ENCODE measurements at regions of chr6 and their contacts with region 1.

Region 1: GRCh38 chr6:50850223-50851048 is 31.8 kb downstream of the TFAP2B start:
- DNase-seq: no peak
- ATAC-seq: no peak
- H3K4me3 ChIP-seq: no peak overlapping the region
- H3K27ac ChIP-seq: no peak overlapping the region
- H3K4me1 ChIP-seq: no peaks in the 10 kb centered on the region
- H3K27me3 ChIP-seq: peaks cover 0 to 32% of the 10 kb centered on the region in 2 experiments; a peak in 3 of 5 replicates
- CTCF ChIP-seq: no peak
- EP300 ChIP-seq: no peak
- POLR2A ChIP-seq: no peak
- RAD21 ChIP-seq: no peak

Region 2: GRCh38 chr6:50791900-50792508 is 58.4 kb before region 1 on chr6:
- CTCF ChIA-PET with region 1: no interaction called
- POLR2A ChIA-PET with region 1: no interaction called
- in situ Hi-C with region 1: no loop called
- intact Hi-C with region 1: loop called (anchors 2 kb)
- DNase-seq: peak; percentile 61
- ATAC-seq: peak; percentile 86
- H3K4me3 ChIP-seq: no peak overlapping the region
- H3K27ac ChIP-seq: no peak overlapping the region
- H3K4me1 ChIP-seq: no peaks in the 10 kb centered on the region
- H3K27me3 ChIP-seq: no peaks in the 10 kb centered on the region
- CTCF ChIP-seq: peak; percentile 82
- EP300 ChIP-seq: no peak
- POLR2A ChIP-seq: no peak
- RAD21 ChIP-seq: 0 out of 2 replicates have a peak, but pooled peaks have one; percentile 40

Region 3: DNA sequence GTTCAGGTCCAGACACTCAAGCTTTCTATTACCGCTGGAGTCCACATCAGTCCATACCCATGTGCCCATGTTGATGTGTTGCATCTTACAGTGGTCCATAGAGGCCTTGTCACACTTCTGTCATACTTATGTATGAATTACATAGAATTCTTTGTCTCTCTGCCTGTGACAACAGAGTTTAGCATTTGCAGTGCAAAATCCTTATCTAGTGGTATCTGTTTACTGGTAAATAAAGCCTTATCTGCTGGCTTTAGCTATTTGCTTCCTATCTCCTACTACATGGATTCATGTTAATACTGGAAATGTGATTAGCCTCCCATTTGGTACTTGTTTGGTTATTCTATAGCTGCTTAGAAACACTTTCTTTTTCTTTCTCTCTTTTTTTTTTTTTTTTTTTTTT is 18.0 kb after region 1 on chr6:
- CTCF ChIA-PET with region 1: no interaction called
- POLR2A ChIA-PET with region 1: no interaction called
- in situ Hi-C with region 1: no loop called
- intact Hi-C with region 1: no loop called
- DNase-seq: no peak
- ATAC-seq: no peak
- H3K4me3 ChIP-seq: no peak overlapping the region
- H3K27ac ChIP-seq: no peak overlapping the region
- H3K4me1 ChIP-seq: no peaks in the 10 kb centered on the region
- H3K27me3 ChIP-seq: no peaks in the 10 kb centered on the region
- CTCF ChIP-seq: no peak
- EP300 ChIP-seq: no peak
- POLR2A ChIP-seq: no peak
- RAD21 ChIP-seq: no peak

Region 4: DNA sequence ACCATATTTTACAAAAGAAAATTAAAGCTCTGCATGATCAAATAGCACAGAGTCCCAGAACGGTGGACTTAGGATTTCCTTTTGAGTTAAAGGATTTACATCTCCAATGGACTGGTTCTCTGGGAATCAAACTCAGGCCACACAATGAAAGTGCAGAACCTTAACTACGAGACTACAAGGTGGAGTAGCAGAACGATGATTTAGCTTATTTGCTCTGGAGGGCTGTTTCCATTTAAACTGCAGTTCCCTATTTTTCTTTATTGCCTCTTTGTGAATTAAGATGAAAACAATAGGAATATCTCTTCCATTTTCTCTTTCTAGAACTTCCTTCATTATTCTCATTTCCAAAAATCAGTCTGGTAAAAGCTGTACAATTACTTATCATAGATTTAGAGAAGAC is 33.9 kb after region 1 on chr6:
- CTCF ChIA-PET with region 1: no interaction called
- POLR2A ChIA-PET with region 1: no interaction called
- in situ Hi-C with region 1: no loop called
- intact Hi-C with region 1: no loop called
- DNase-seq: no peak
- ATAC-seq: no peak
- H3K4me3 ChIP-seq: no peak overlapping the region
- H3K27ac ChIP-seq: no peak overlapping the region
- H3K4me1 ChIP-seq: no peaks in the 10 kb centered on the region
- H3K27me3 ChIP-seq: no peaks in the 10 kb centered on the region
- CTCF ChIP-seq: no peak
- EP300 ChIP-seq: no peak
- POLR2A ChIP-seq: no peak
- RAD21 ChIP-seq: no peak

Region 5: GRCh38 chr6:51057296-51057695 is 206.9 kb after region 1 on chr6:
- CTCF ChIA-PET with region 1: no interaction called
- POLR2A ChIA-PET with region 1: no interaction called
- in situ Hi-C with region 1: no loop called
- intact Hi-C with region 1: no loop called
- DNase-seq: no peak
- ATAC-seq: no peak
- H3K4me3 ChIP-seq: no peak overlapping the region
- H3K27ac ChIP-seq: no peak overlapping the region
- H3K4me1 ChIP-seq: no peaks in the 10 kb centered on the region
- H3K27me3 ChIP-seq: no peaks in the 10 kb centered on the region
- CTCF ChIP-seq: no peak
- EP300 ChIP-seq: no peak
- POLR2A ChIP-seq: no peak
- RAD21 ChIP-seq: no peak

Measured in HepG2 (cell line).